ENCODE measurements at regions of chr20 and their contacts with region 1.

Region 1: DNA sequence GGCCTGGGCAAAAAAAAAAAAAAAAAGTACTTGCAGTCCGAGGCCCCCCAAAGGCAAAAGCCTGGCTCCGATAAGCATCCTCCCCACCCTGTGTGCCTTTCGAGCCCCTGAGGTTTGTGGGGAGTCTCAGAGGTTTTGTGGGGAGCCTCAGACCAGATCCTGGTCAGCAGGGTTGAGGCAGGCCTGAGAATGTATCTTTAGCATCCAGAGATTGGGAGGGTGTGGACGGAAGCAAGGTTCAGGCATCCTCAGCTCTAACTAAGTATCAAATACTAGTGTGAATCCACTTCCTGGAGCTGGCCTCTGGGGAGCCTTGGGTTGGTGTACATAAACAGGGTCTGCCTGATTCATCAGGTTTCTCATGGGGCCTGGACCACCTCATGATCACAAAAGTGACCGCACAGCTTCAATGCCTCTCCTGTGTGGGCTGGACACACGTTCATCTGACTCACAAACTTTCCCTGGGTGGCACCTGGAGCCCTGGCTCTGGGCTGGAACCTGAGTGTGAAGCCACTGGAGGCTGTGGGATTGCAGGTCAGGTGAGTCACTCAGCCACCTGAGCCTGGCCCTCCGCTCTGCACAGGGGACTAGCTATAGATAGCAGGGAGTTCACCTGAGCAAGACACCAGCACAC is 24.4 kb downstream of the PCMTD2 start:
- DNase-seq: peak; percentile 25
- ATAC-seq: peak; percentile 34
- H3K4me3 Mint-ChIP-seq: no peak overlapping the region
- H3K27ac Mint-ChIP-seq: no peak overlapping the region
- H3K4me1 Mint-ChIP-seq: peaks cover 17% of the 10 kb centered on the region
- H3K27me3 Mint-ChIP-seq: no peaks in the 10 kb centered on the region
- CTCF ChIP-seq: no peak

Region 2: GRCh38 chr20:64069614-64070243 is 210.2 kb before region 1 on chr20:
- CTCF ChIA-PET with region 1: no interaction called
- POLR2A ChIA-PET with region 1: no interaction called
- intact Hi-C with region 1: no loop called
- DNase-seq: peak; percentile 49
- ATAC-seq: no peak
- H3K4me3 Mint-ChIP-seq: no peak overlapping the region
- H3K27ac Mint-ChIP-seq: no peak overlapping the region
- H3K4me1 Mint-ChIP-seq: peaks cover 23% of the 10 kb centered on the region
- H3K27me3 Mint-ChIP-seq: no peaks in the 10 kb centered on the region
- CTCF ChIP-seq: peak; percentile 84

Region 3: DNA sequence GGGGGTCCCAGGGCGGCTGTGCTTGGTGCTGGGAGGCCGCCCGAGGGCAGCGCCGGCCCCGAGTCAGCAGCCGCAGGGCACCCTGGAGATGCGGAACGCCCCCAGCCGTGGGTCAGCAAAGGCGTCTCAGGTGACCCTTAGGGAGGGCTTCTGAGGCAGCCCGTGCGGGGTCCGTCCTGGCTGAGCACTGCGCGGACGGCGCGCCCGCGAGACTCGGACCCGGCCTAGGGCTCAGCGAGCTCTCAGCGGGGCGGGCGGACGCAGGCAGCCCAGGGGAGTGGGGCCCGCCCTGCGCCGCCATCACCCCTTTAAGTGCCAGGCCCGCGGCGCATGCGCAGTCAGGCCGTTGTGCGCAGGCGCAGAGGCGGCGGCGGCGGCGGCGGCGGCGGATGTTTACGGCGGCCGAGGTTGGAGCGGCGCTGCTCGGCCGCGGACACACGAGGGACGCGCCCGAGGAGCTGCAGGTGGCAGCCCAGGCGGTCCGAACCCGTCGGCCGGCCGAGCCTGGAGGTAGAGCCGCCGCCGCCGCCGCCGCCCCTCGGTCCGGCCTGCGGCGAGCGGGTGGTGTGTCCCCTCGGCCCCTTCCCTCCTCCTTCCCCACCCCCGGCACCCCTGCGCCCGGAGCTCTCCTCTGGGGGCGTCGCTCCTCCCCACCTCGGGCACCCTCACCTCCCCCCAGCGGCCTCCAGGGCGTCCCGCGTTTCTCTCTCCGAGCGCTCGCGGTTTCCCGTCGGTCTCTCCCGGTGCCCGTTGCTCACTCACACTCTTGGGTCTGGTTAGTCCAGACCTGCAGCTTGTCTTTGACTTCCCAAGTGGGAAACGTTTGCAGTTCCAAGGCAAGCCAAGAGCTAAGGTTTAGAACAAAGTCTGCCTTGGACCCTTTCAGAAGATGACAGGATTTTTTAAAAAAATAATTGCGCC is 24.3 kb before region 1 on chr20 and contains the start of gene PCMTD2:
- CTCF ChIA-PET with region 1: interaction called, 45 read pairs
- POLR2A ChIA-PET with region 1: no interaction called
- intact Hi-C with region 1: no loop called
- DNase-seq: peak; percentile 89
- ATAC-seq: peak; percentile 92
- H3K4me3 Mint-ChIP-seq: peak within 1 kb of the TSS; percentile 82
- H3K27ac Mint-ChIP-seq: peak within 1 kb of the TSS; percentile 92
- H3K4me1 Mint-ChIP-seq: peaks cover 41% of the 10 kb centered on the region
- H3K27me3 Mint-ChIP-seq: peaks cover 11% of the 10 kb centered on the region
- CTCF ChIP-seq: no peak
- total RNA-seq, gene PCMTD2: 26.0 to 28.6 TPM

Region 4: DNA sequence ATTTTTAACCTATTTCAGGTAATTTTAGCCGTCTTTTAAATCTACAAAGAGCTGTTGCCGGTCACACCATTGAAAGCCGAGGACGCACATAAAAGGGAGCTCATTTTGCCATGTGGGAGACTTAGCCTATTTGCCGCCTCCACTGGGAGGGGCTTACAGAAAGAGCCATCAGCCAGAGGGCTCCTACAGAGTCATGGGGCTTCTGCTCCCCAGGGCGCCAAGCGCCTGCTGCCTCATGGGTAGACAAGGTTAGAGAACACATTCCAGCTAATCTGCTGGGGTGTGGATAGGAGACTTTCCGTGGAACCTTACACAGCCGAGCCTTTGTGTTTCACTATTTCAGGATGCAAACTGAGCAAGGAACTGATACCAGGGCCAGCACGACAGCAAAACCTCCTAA is 11.8 kb before region 1 on chr20:
- CTCF ChIA-PET with region 1: no interaction called
- POLR2A ChIA-PET with region 1: no interaction called
- intact Hi-C with region 1: no loop called
- DNase-seq: no peak
- ATAC-seq: no peak
- H3K4me3 Mint-ChIP-seq: no peak overlapping the region
- H3K27ac Mint-ChIP-seq: no peak overlapping the region
- H3K4me1 Mint-ChIP-seq: peaks cover 25% of the 10 kb centered on the region
- H3K27me3 Mint-ChIP-seq: no peaks in the 10 kb centered on the region
- CTCF ChIP-seq: no peak